ENCODE measurements at regions of chr6 and their contacts with region 1.

Region 1: GRCh38 chr6:44221291-44221960 is 2.0 kb upstream of the SLC29A1 start:
- DNase-seq: peak; percentile 70
- H3K4me3 Mint-ChIP-seq: peak overlapping the region; percentile 44
- H3K27ac Mint-ChIP-seq: peak overlapping the region; percentile 67
- H3K4me1 Mint-ChIP-seq: peaks cover 44% of the 10 kb centered on the region
- H3K27me3 Mint-ChIP-seq: peaks cover 9% of the 10 kb centered on the region

Region 2: DNA sequence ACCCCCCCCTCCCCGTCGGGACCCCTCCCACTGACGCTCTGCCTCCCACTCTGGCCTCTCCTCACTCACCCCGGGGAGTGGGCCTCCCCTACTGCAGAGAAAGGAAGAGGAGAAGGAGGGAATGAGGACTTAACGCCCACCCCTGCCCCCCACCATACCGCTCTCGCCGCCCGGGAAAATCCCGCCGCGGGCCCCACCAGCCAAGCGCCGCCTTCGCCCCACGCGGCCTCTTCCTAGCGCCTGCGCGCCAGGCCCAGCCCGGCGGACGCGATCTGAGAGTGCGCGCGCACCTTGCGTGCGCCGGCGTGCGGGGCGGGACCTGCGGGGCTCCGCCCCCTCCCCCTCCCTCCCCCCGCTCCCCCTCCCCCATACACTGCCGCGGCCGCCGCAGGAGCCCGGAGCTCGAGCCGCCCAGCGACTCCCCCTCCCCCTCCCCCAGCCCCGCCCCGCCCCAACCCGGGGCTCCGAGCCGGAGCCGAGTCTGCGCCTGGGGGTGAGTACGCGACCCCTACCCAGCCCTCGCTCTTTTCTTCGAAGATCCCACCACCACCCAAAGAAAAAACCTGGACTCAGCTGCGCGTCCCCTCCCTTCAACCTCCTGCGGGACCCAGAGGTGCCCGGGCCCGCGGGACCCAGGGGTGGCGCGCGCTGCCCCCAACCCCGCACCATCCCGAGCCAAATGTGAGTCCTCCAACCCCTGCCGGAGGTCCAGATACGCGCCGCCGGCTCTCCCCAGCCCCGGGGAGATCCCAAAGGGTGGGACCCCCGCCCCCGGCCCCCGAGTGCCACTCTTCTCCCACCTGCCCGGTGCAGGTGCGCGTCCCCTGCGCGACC is 94.0 kb before region 1 on chr6 and contains the starts of genes MRPL14 and TMEM63B:
- intact Hi-C with region 1: loop called (anchors 1 kb)
- DNase-seq: peak; percentile 86
- H3K4me3 Mint-ChIP-seq: peak within 1 kb of the TSS; percentile 85
- H3K27ac Mint-ChIP-seq: peak within 1 kb of the TSS; percentile 93
- H3K4me1 Mint-ChIP-seq: peaks cover 43% of the 10 kb centered on the region
- H3K27me3 Mint-ChIP-seq: no peaks in the 10 kb centered on the region
- total RNA-seq, gene MRPL14: 67.3 and 70.3 TPM in 2 replicates
- total RNA-seq, gene TMEM63B: 20.3 and 23.6 TPM in 2 replicates

Region 3: GRCh38 chr6:44172731-44173500 is 48.5 kb before region 1 on chr6:
- intact Hi-C with region 1: loop called (anchors 1 kb)
- DNase-seq: peak; percentile 62
- H3K4me3 Mint-ChIP-seq: no peak overlapping the region
- H3K27ac Mint-ChIP-seq: peak overlapping the region; percentile 9
- H3K4me1 Mint-ChIP-seq: peaks cover 18% of the 10 kb centered on the region
- H3K27me3 Mint-ChIP-seq: peaks cover 3% of the 10 kb centered on the region

Region 4: GRCh38 chr6:44232676-44233566 is 11.5 kb after region 1 on chr6:
- intact Hi-C with region 1: loop called (anchors 1 kb)
- DNase-seq: no peak
- H3K4me3 Mint-ChIP-seq: no peak overlapping the region
- H3K27ac Mint-ChIP-seq: peak overlapping the region; percentile 70
- H3K4me1 Mint-ChIP-seq: peaks cover 28% of the 10 kb centered on the region
- H3K27me3 Mint-ChIP-seq: no peaks in the 10 kb centered on the region

Region 5: DNA sequence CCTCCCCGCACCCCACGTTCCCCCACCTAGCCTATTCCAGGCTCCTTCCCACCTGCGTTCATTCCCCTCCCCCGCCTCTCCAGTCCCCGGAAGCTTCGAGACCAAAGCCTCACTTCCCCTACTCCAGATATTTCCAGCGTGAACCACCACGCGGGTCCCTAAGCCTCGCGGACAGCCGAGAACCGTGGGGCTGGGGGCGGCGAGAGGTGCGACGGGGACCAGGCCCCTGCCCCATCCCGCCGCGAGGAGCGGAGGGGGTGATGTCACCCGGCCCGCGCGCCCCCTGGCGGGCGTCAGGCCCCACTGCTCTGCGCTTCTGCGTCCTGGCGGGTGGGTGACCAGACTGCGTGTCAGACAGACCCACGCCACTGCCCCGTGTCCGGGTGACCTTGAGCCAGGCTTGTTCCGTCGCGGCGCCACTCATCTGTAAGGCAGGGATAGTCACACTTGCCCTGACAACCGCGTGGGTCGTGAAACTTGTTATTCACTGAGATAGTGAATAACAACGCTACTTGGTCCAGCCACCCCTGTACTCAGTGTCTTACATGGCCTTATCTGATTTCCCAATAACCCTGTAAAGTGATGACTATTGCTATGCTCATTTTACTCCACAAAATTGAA is 16.5 kb after region 1 on chr6:
- intact Hi-C with region 1: loop called (anchors 1 kb)
- DNase-seq: peak; percentile 78
- H3K4me3 Mint-ChIP-seq: peak overlapping the region; percentile 83
- H3K27ac Mint-ChIP-seq: peak overlapping the region; percentile 89
- H3K4me1 Mint-ChIP-seq: peaks cover 48% of the 10 kb centered on the region
- H3K27me3 Mint-ChIP-seq: no peaks in the 10 kb centered on the region

Region 6: GRCh38 chr6:44246663-44247337 is 25.4 kb after region 1 on chr6 and contains the start of gene HSP90AB1:
- intact Hi-C with region 1: loop called (anchors 1 kb)
- DNase-seq: peak; percentile 95
- H3K4me3 Mint-ChIP-seq: peak within 1 kb of the TSS; percentile 96
- H3K27ac Mint-ChIP-seq: peak within 1 kb of the TSS; percentile 99
- H3K4me1 Mint-ChIP-seq: peaks cover 41% of the 10 kb centered on the region
- H3K27me3 Mint-ChIP-seq: peaks cover 3% of the 10 kb centered on the region
- total RNA-seq, gene HSP90AB1: 2,402 and 2,404 TPM in 2 replicates

Region 7: DNA sequence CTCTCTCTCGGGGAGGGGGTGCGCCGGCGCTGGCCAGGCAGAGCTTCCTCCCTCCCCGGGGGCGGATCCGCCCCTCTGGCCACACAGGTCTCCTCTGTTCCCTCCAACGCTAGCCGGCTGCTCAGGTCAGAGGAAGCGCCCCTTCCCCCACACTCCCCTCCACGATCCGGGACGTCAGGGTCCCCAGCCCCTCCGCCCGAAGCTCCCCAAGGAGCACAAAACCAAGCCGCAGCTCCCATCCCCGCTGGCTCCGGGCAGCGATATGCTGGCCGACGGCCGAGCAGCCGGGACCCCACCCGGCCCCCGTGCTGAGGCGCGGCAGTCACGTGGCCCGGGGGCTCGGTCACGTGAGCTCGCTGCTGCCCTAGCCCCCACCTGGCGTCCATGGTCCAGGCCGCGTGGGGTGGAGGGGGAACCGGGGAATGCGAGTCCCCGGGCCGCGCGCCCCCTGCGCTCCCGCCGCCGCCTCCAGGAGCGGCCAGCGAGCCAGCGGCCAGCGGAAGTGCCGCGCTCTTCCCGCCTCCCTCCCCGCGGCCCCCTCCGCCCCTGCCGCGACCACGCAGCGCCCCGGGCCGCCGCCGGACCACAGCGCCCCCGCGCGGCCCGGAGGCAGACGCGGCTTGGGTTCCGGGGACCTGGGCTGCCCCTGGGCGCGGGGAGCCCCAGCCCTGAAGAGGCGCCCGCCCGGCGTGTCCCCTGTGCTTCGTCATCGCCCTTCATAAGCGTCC is 35.8 kb after region 1 on chr6 and contains the start of gene SLC35B2:
- intact Hi-C with region 1: loop called (anchors 2 kb)
- DNase-seq: peak; percentile 65
- H3K4me3 Mint-ChIP-seq: peak within 1 kb of the TSS; percentile 84
- H3K27ac Mint-ChIP-seq: peak within 1 kb of the TSS; percentile 85
- H3K4me1 Mint-ChIP-seq: peaks cover 51% of the 10 kb centered on the region
- H3K27me3 Mint-ChIP-seq: no peaks in the 10 kb centered on the region
- total RNA-seq, gene SLC35B2: 27.6 and 29.6 TPM in 2 replicates

Measured in activated T-helper 2 cell treated with anti-CD3 and anti-CD28 coated beads, Interferon-gamma antibody, Interleukin-2, Interleukin-4, amounts not matched to agents 10 μg/mL and 5 μg/mL and 100 μg/mL, durations not matched to agents 14 hours and 24 hours and 36 hours (primary cell).